Left cardiac atrium (tissue), 4 donors: ENCODE measurements at regions of chr20 and their contacts with region 1.

Region 1: GRCh38 chr20:6074145-6074561 is 20.3 kb upstream of the LRRN4 start:
- DNase-seq: no peak
- ATAC-seq: peak; percentile 57 to 82

Region 2: DNA sequence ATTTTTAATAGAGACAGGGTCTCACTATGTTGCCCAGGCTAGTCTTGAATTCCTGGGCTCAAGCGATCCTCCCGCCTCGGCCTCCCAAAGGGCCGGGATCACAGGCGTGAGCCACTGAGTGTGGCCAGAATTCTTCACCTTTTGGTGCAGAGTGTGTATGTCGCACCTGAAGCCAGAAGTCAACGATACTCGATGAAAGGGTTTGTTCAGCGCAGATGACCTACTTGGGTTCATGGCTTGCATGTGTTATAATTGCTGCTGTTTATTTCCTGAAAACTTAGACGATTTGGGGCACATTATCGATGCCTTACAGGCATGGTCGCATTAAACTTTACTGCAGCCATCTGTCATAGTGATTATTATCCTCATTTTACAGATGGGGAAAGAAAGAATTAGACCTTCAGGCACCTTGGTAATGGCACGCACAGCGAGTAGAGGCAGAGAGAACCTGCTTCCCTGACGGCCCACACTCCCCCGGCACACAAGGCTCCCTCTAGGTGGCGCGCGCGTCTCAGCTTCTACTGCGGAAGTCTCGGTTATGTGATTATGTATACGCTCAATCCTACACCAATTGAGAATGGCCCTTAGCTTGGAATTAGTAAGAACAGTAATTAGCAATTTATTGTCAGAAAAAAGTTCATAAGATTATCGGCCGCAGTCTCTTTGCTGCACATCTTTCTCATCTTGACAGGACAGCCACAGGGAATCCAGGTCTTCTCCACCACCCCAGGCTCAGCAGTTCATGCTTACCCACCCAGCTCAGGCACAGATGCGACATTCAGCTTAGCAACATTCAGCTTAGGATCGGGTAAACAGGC is 544.6 kb before region 1 on chr20:
- intact Hi-C with region 1: loop called (anchors 2 to 5 kb)
- DNase-seq: peak; percentile 83
- ATAC-seq: peak; percentile 83 to 90

Region 3: DNA sequence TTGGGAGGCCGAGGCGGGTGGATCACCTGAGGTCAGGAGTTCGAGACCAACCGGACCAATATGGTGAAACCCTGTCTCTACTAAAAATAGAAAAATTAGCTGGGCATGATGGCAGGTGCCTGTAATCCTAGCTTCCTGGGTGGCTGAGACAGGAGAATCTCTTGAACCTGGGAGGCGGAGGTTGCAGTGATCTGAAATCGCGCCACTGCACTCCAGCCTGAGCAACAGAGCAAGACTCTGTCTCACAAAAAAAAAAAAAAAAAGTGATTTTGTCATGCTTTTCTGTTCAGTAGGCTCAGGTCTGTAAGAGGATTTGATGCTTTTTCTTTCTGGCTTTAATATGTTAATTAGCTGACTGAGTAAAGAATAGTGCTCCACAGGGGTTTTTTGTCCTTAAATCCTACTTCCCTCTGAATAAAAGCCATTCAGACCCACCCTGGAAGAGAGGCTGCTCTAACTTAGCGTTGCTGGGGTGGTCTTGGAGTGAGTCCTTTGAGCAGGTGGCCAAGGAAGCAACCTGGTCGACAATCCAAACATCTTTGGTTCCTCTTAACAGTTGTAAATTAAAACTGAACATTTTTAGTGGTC is 104.7 kb before region 1 on chr20:
- intact Hi-C with region 1: loop called in 1 of 2 experiments (anchors 5 kb)
- DNase-seq: no peak
- ATAC-seq: no peak

Region 4: GRCh38 chr20:6008254-6008653 is 65.9 kb before region 1 on chr20:
- intact Hi-C with region 1: loop called in 1 of 2 experiments (anchors 2 kb)
- DNase-seq: peak; percentile 61
- ATAC-seq: peak; percentile 29 to 64

Region 5: DNA sequence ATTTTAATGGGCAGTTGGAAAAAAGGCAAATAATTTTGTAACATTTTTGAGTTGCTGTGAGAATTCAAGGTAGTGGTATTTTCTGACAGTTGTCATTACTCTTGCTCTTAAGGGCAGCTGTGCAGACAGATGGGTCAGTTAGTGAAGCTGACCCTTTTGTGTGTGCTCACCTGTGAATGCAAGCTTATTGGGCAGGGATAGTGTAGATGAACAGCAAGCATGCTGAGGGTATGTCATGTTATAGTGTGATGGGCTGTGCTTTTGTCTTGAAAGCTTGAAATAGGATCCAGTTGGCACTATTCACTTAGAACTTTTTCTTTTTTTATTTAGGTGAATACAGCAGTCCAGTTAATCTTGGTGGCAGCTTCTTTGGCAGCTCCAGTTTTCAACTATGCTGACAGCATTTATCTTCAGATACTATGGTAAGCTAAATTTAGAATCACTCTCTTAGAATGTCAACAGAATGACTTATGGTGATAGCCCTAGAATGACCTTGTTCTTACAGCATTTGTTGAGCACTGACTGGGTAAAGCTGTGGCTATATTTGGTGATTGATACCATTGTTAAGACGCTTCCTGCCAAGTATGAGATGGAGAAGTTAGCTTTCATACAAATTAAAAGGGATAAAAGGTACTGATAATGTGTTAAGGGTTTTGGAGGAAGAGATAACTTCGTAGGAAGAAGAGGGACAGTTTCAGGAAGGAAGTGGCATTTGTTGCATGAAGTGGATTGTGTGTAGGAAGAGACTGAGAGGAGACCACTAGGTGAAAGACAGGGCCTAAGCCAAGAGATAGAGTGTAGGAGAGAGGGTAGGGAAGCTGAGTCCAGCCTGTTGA is 39.8 kb before region 1 on chr20:
- intact Hi-C with region 1: loop called in 1 of 2 experiments (anchors 5 kb)
- DNase-seq: no peak
- ATAC-seq: peak; percentile 71 to 85